Common myeloid progenitor, CD34-positive (primary cell): ENCODE measurements at regions of chr17 and their contacts with region 1.

Region 1: DNA sequence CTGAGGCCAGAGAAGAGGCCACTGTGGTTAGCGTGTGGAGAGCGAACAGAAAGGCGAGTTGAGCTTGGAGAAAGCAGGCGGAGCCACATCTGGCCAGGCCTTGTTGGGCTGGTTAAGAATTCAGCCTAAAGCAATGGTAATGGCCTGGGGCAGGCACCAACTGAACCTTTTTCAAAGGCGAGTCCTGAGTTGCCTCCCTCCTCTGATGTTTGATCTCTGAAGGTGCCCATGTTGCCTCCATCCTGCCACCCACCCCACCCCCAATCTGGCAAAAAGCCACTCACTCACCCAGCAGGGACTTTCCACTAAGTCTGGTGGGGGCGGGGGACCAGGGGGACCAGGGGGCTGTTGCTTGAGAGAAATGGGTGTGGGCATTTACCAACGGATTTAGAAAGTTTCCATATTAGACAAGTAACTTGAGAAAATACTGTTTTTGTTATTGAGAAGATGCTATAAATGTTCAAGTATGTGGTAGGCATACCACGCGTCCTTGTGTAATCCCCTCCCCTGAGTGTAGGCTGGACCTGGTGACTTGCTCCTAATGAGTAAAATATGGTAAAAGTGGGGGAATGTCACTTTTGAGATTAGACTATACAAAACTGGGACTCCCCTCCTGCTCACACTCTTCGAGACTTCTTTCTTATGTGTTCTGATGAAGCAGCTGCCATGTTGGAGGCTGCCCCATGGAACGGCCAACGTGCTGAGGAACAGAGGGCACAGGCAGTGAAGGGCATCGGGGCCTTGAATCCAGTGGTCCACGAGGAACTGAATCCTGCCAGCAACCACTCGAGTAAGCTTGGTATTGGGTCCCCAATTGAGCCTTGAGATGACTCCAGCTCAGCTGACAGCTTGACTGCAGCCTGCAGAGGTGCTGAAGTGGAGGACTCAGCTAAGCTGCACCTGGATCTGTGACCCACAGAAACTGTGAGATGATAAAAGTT is 29.9 kb upstream of the TNS4 start:
- DNase-seq: peak in 1 of 3 donors; percentile 23
- H3K4me3 ChIP-seq: no peak overlapping the region
- H3K27ac ChIP-seq: no peak overlapping the region
- H3K4me1 ChIP-seq: peaks cover 4 to 22% (median 9%) of the 10 kb centered on the region in 4 experiments
- H3K27me3 ChIP-seq: peaks cover 0 to 5% (median 0%) of the 10 kb centered on the region in 5 experiments

Region 2: DNA sequence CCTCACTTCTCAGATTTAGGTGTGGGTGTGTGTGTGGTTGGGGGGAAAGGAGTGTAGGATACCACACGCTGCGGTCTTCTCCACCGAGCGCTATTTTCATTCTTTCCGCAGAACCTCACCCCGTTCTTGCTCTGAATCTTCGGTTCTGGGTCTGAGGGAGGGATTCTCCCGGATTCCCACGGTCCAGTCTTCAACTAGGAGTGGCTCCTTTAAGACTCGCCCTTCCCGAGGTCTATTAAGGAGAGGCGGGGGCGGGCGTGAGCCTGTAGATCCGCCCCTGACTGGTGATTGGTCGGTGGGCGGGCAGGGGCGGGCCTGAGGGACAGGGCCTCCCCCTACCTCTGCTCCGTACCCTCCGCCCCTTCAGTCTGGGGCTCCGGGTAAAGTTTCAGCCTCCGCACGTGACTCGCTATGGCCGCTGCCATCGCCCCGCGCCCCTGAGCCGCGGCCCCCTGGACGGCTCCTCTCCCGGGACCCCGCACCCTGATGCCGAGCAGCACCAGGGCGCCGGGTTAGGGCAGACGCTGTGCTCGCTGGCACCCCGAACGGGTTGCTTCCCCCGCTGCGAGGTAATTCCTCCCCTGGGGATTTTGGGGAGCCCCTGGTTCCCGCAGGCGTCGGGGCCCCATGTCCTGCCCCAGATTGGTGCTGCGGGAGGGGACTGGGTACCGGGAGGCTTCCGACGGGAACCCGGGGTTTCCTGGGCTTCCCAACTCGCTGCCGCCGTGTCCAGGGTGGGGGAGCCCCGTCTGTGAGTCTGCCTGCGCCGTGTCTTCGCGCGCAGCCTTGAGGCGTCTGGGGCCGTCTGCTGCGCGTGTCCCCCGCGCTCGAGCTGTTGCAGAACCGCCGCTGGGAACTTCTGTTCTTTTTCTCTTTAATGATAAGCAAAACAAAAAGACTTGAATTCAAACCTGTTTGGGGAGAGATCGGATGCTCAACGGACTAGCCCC is 213.2 kb before region 1 on chr17:
- CTCF ChIA-PET with region 1: no interaction called
- POLR2A ChIA-PET with region 1: no interaction called
- DNase-seq: peak; percentile 91 to 94 (median 93)
- H3K4me3 ChIP-seq: peak overlapping the region; percentile 61 to 89 (median 76)
- H3K27ac ChIP-seq: peak overlapping the region; percentile 40 to 89
- H3K4me1 ChIP-seq: peaks cover 19 to 98% (median 93%) of the 10 kb centered on the region in 4 experiments
- H3K27me3 ChIP-seq: no peaks in the 10 kb centered on the region

Region 3: DNA sequence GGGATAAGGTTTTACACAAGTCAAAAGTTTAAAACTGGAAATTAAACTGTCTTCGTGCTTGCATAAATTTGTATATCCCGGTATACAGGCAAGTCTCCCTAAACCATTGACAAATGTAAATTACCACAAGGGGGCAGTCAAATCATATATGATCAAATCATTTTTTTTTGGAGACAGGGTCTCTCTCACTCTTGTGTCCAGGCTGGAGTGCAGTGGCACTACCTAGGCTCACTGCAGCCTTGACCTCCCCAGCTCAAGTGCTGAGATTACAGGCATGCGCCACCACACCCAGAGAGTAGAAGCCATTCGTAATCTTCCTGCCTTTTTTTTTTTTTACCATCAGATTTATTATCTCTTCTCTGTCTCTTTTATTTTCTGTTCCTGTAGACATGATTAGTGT is 132.1 kb before region 1 on chr17:
- CTCF ChIA-PET with region 1: interaction called, 18 read pairs
- POLR2A ChIA-PET with region 1: no interaction called
- DNase-seq: peak; percentile 65 to 77 (median 75)
- H3K4me3 ChIP-seq: no peak overlapping the region
- H3K27ac ChIP-seq: no peak overlapping the region
- H3K4me1 ChIP-seq: no peaks in the 10 kb centered on the region
- H3K27me3 ChIP-seq: no peaks in the 10 kb centered on the region

Region 4: GRCh38 chr17:40443583-40444327 is 87.6 kb before region 1 on chr17:
- CTCF ChIA-PET with region 1: interaction called, 61 read pairs
- POLR2A ChIA-PET with region 1: no interaction called
- DNase-seq: peak; percentile 53 to 72 (median 68)
- H3K4me3 ChIP-seq: peak overlapping the region; percentile 6 to 68 (median 58)
- H3K27ac ChIP-seq: no peak overlapping the region
- H3K4me1 ChIP-seq: peaks cover 5 to 55% (median 48%) of the 10 kb centered on the region in 4 experiments
- H3K27me3 ChIP-seq: peaks cover 0 to 23% (median 0%) of the 10 kb centered on the region in 5 experiments

Region 5: GRCh38 chr17:40582328-40582901 is 51.1 kb after region 1 on chr17:
- CTCF ChIA-PET with region 1: interaction called, 13 read pairs
- POLR2A ChIA-PET with region 1: interaction called, 3 read pairs
- DNase-seq: peak; percentile 82 to 99 (median 97)
- H3K4me3 ChIP-seq: peak overlapping the region in 4 of 7 experiments; percentile 5 to 60 (median 24)
- H3K27ac ChIP-seq: peak overlapping the region; percentile 61 to 76
- H3K4me1 ChIP-seq: peaks cover 15 to 35% (median 26%) of the 10 kb centered on the region in 4 experiments
- H3K27me3 ChIP-seq: no peaks in the 10 kb centered on the region

Region 6: DNA sequence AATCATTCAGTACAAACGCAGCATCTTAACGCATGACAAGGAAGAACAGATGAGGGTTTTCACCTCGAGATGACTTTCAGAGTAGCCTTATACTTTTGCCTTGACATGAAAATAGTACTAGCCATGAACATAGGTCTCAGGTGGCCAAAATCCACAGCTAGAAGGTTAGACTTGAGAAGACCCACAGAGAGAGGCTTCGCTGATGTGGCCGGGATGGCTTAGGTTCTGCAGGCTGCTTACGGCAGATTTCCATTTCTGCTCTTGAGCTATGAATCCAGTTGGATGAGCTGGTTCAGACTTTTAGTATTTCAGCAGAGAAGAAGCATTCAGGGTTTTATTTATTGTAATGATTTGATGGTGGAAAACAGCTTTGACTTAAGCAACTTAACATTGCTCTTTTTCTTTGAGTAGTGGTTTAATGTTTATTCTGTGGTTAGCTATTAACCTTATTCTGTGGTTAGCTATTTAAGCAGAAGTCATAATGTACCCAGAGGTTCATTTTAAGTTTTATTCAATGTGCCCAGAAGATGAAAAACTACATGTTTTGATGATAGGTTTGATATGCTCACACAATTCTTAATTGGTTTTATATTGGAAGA is 164.7 kb after region 1 on chr17:
- CTCF ChIA-PET with region 1: no interaction called
- POLR2A ChIA-PET with region 1: no interaction called
- DNase-seq: peak in 2 of 3 donors; percentile 29 to 33
- H3K4me3 ChIP-seq: no peak overlapping the region
- H3K27ac ChIP-seq: no peak overlapping the region
- H3K4me1 ChIP-seq: peaks cover 0 to 5% (median 0%) of the 10 kb centered on the region in 4 experiments
- H3K27me3 ChIP-seq: peaks cover 8 to 89% (median 49%) of the 10 kb centered on the region in 5 experiments